ENCODE measurements at regions of chr20 and their contacts with region 1.

Region 1: DNA sequence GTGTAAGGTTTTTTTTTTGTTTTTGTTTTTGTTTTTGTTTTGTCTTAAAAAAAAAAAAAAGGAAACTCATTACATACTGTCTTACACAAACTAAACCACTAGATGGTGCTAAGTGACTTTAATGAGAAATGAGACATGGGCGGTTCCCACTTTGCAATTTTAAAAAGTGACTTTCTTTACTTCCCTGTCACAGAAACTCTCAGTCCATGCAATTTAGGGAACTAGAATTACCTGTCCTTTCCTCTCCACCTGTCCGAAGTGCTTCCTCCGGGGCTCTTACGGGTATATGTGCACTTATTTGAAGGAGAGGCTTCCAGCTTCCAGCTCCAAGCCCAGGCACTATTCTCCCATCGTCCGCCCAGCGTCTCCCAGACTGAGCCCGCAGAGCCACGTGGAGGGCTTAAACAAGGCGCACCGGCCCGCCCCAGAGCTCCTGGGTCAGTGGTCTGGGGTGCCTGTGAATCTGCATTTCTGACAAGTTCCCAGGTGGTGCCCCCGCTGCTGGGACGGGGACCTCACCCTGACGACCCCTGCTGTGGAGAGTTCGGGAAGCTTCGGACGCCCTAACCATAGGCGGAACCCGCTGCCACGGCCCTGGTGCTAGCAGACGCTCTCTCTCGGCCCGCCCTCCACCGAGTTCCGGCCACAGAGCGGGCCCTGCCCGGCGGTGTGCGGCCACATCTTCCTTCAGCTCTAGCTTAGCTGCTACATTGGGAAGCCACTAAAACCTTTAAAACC is 26.1 kb downstream of the BFSP1 start:
- DNase-seq: peak; percentile 64
- H3K4me3 ChIP-seq: peak overlapping the region; percentile 27 to 33 (median 28)
- H3K27ac ChIP-seq: peak overlapping the region; percentile 93
- H3K4me1 ChIP-seq: peaks cover 21% of the 10 kb centered on the region
- H3K27me3 ChIP-seq: no peaks in the 10 kb centered on the region
- CTCF ChIP-seq: peak; percentile 46 to 67

Region 2: DNA sequence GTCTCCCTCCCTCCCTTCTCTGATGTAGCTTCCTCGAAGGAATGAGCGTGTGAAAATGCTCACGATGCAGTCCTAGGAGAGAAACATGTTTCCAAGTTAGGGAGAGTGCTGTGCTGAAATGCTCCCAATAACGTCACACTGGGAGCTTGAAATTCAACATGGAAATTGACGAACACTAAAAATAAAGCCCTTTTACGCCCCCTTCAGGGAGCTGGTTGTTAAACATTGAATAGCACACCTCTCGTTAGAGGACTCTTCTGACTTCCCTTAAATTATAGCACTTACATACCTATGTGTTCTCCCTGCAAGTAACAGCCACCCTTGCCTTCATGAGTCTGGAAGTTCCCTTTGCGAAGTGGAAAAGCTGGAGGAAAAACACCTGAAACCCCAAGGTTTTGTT is 62.5 kb before region 1 on chr20:
- CTCF ChIA-PET with region 1: no interaction called
- dilution Hi-C with region 1: no loop called
- in situ Hi-C with region 1: no loop called
- intact Hi-C with region 1: no loop called
- DNase-seq: no peak
- H3K4me3 ChIP-seq: no peak overlapping the region
- H3K27ac ChIP-seq: no peak overlapping the region
- H3K4me1 ChIP-seq: no peaks in the 10 kb centered on the region
- H3K27me3 ChIP-seq: peaks cover 11% of the 10 kb centered on the region
- CTCF ChIP-seq: no peak

Region 3: GRCh38 chr20:17536944-17537444 is 31.9 kb after region 1 on chr20:
- CTCF ChIA-PET with region 1: no interaction called
- dilution Hi-C with region 1: no loop called
- in situ Hi-C with region 1: no loop called
- intact Hi-C with region 1: loop called (anchors 2 kb)
- DNase-seq: peak; percentile 66
- H3K4me3 ChIP-seq: no peak overlapping the region
- H3K27ac ChIP-seq: no peak overlapping the region
- H3K4me1 ChIP-seq: peaks cover 8% of the 10 kb centered on the region
- H3K27me3 ChIP-seq: no peaks in the 10 kb centered on the region
- CTCF ChIP-seq: peak; percentile 88 to 96

Region 4: GRCh38 chr20:17617551-17618223 is 112.6 kb after region 1 on chr20:
- CTCF ChIA-PET with region 1: no interaction called
- dilution Hi-C with region 1: no loop called
- in situ Hi-C with region 1: no loop called
- intact Hi-C with region 1: loop called (anchors 1 kb)
- DNase-seq: no peak
- H3K4me3 ChIP-seq: no peak overlapping the region
- H3K27ac ChIP-seq: no peak overlapping the region
- H3K4me1 ChIP-seq: peaks cover under 1% of the 10 kb centered on the region
- H3K27me3 ChIP-seq: no peaks in the 10 kb centered on the region
- CTCF ChIP-seq: peak; percentile 42 to 67

Region 5: DNA sequence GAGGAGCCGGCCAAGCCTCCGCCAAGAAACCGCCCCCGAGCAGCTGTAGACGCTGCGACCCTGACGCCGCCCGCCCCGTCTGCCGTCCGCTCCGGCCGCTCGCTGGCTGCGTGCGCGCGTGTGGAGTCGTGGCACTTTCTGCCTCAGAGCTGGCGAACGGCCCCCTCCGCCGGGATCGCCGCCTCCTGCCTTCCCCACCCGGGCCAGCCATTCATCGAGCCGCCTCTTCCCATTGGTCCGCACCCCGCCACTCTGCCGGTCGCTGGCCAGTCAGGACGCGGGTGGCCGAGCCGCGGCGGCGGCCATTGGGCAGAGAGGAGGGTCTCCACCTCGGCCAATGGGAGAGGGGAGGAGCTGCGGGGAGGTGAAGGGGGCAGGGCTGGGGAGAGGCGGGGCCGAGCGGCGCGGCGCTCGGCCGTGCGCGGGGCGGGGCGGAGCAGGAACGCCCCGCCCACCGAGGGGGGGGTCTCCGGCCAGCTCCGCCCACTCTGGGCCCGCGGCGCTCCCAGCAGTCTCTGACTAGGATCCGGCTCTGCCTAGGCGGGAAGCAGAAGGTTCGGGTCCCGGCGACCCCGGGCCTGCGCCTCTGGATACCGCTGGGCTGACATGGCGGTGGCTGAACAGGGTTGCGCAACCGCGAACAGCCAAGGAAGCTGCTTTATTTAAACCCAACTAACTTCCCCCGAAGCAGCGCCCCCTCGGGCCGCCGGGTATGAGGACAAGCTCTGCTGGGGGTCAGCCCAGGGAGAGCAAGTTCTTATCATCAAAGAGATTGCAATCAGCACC is 177.2 kb after region 1 on chr20 and contains the start of gene RRBP1:
- CTCF ChIA-PET with region 1: no interaction called
- dilution Hi-C with region 1: no loop called
- in situ Hi-C with region 1: no loop called
- intact Hi-C with region 1: loop called (anchors 1 kb)
- DNase-seq: peak; percentile 99
- H3K4me3 ChIP-seq: peak within 1 kb of the TSS; percentile 78 to 88 (median 85)
- H3K27ac ChIP-seq: peak within 1 kb of the TSS; percentile 67
- H3K4me1 ChIP-seq: peaks cover 11% of the 10 kb centered on the region
- H3K27me3 ChIP-seq: no peaks in the 10 kb centered on the region
- CTCF ChIP-seq: peak; percentile 45 to 68
- total RNA-seq, gene RRBP1: 85.2 to 230 TPM

Region 6: DNA sequence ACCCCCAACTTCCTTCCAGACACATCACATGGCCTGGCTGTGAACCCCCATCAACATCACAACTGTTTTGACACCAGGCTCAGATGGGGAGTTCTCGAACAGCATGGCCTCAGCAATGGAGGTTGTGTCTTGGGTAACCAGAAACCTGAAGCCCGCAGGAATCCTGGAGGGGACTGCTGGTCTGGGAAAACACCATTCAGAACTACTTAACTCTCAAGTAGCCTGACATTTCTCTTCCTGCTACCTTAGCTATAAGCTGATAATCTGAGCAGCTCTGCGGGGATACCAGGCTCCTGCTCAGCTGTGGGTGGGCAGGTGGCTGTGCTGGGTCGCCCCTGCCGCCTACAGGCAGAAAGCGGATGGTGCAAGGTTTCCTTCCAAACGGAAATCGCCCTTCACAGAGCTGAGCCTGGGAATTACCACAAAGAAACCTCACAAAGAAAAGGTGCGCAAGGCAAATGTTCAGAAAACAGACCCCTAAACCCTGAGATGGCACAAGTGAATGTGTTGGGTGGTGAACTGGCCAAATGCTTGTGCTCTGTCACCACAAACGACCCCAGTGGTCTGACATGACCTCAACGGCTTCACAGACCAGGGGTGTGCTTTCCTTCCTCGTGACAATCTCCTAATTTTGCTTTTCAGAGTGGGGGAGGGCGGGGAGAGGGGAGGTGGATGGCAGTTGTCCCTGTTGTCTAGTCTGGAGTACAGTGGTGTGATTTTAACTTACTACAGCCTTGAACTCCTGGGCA is 434.0 kb after region 1 on chr20:
- CTCF ChIA-PET with region 1: interaction called, 13 read pairs
- dilution Hi-C with region 1: no loop called
- in situ Hi-C with region 1: no loop called
- intact Hi-C with region 1: loop called (anchors 1 kb)
- DNase-seq: peak; percentile 29
- H3K4me3 ChIP-seq: no peak overlapping the region
- H3K27ac ChIP-seq: no peak overlapping the region
- H3K4me1 ChIP-seq: no peaks in the 10 kb centered on the region
- H3K27me3 ChIP-seq: no peaks in the 10 kb centered on the region
- CTCF ChIP-seq: peak; percentile 82 to 83

Region 7: DNA sequence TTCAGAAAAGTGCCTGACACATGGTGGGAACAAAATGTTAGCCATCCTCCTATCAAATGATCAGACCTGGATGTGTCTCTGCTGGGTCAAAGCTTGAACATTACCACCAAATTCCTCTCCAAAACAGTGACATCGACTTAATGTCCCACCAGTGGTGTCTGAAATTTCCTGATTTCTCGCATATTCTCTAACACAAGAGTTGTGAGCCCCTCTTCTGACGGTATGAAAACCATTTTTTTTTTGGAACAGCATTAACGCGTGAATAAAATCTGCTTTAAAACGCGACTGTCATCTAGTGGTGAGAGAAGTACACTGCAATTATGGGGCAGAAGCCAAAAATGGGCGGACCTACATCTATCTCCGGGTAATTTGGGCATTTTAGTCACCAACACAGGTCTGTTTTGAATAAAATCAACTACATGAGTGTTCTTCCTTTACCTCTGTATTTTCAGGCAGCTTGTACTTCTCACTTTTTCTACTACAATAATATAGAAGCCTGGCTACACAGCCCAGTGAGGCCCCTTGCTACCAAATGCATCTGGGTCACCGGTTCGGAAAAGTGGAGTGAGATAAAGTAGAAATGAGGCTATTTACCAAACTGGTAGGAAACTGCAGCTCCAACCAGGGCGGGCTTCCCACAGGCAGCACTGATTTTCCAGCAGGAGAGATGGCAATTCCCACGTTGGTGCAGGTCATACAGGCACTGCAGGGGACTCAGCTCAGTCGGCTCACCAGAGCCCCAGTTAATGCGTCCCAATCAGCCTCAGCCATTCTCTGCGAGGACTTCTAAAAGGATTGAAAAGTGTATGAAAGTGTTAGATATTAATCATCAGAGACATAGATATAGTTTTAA is 491.1 kb after region 1 on chr20:
- CTCF ChIA-PET with region 1: interaction called, 6 read pairs
- dilution Hi-C with region 1: no loop called
- in situ Hi-C with region 1: no loop called
- intact Hi-C with region 1: loop called (anchors 1 kb)
- DNase-seq: peak; percentile 55
- H3K4me3 ChIP-seq: no peak overlapping the region
- H3K27ac ChIP-seq: no peak overlapping the region
- H3K4me1 ChIP-seq: peaks cover 14% of the 10 kb centered on the region
- H3K27me3 ChIP-seq: no peaks in the 10 kb centered on the region
- CTCF ChIP-seq: peak; percentile 98 to 100